Right ventricle myocardium inferior (tissue), 1 donor: ENCODE measurements at regions of chr22 and their contacts with region 1.

Region 1: DNA sequence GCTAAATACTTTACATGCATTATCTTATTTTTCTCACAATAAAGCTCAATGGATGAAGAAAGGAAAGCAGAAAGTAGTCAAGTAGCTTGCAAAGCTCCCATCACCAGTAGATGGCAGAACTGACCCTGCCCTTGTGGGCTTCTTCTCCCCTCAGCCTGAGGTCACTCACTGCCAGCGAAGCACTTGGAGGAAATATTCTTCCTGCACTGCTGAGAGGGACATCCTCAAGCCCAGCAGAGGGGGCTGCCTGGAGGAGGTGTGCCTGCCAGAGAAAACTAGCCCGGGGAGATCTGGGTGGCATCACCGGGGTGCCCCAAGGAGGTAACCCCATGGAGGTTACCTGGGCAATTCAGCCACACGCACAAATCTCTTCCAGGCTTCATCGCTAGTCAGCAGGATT is 6.6 kb downstream of the APOL4 start:
- DNase-seq: no peak
- ATAC-seq: peak; percentile 43

Region 2: GRCh38 chr22:35821654-35822053 is 373.3 kb before region 1 on chr22:
- intact Hi-C with region 1: no loop called
- DNase-seq: no peak
- ATAC-seq: no peak

Region 3: DNA sequence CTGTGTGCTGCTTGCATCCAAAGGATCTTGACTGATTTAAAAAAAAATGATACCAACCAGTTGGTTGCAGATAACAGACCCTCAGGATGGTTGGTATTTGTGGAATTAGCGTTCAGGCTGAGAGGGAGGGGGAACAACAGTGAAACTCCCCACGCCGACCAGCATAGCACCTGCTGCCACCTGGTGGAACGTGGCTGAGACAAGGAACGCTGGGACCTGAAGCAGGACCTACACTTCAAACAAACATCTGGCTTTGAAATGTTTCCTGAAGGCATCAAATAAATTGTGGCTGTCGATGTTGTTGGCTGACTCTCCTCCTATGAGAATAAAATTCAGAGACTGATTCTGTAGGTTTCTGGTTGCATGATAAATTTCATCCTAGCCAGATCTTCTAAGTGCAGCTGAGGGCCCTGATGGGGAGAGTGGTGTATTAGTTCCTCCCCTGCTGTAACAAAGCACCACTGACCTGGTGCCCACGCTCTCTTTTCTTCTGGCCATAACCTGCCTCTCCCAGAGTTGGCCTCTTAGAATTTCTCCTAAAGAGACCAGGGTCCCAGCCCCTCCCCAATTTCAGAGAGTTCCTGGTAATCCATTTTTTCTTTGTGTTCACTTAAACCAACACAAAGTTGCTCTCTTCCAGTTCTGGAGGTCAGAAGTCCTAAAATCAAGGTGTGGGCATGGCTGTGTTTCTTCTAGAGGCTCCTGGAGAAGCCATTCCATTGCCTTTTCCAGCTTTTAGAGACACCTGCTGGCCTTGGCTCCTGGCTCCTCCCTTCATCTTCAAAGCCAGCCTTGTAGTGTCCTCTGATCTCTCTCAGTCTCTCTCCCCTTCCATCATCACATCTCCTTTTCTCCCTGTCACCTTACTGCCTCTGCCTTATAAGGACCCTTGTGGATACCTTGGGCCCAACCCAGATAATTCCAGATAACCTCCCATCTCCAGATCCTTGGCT is 27.1 kb after region 1 on chr22:
- intact Hi-C with region 1: no loop called
- DNase-seq: no peak
- ATAC-seq: peak; percentile 63

Region 4: GRCh38 chr22:36277482-36278291 is 82.7 kb after region 1 on chr22:
- intact Hi-C with region 1: loop called (anchors 5 kb)
- DNase-seq: no peak
- ATAC-seq: peak; percentile 65

Region 5: GRCh38 chr22:36486619-36487384 is 291.8 kb after region 1 on chr22:
- intact Hi-C with region 1: loop called (anchors 2 kb)
- DNase-seq: peak; percentile 15
- ATAC-seq: no peak